Psoas muscle (tissue), 8 donors: ENCODE measurements at regions of chr7 and their contacts with region 1.

Region 1: GRCh38 chr7:2403014-2403717 is at the start of gene CHST12:
- DNase-seq: peak; percentile 94 to 97
- ATAC-seq: peak; percentile 93 to 94 (median 93)
- H3K4me3 ChIP-seq: peak within 1 kb of the TSS; percentile 95
- H3K27ac ChIP-seq: peak within 1 kb of the TSS; percentile 77
- H3K4me1 ChIP-seq: peaks cover 26% of the 10 kb centered on the region
- H3K27me3 ChIP-seq: no peaks in the 10 kb centered on the region
- CTCF ChIP-seq: no peak
- total RNA-seq, gene CHST12: 6.6 to 12.0 (median 9.4) TPM

Region 2: DNA sequence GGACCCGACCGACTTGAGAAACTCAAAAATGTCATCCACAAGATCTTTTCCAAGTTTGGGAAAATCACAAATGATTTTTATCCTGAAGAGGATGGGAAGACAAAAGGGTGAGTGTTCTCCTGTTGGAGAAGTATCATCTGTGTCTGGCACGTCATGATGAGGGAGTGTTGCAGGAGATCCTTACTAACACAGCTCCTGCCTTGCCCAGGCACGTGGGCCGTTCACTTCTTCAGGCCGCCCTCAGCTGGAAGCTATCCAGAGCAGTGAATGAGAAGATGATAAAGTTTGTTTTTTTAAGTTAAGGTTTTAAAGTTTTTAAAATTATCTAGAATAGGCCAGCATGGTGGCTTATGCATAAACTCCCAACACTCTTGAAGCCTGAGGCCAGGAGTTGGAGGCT is 42.4 kb before region 1 on chr7:
- intact Hi-C with region 1: loop called in 1 of 2 experiments (anchors 5 kb)
- DNase-seq: no peak
- ATAC-seq: no peak
- H3K4me3 ChIP-seq: no peak overlapping the region
- H3K27ac ChIP-seq: no peak overlapping the region
- H3K4me1 ChIP-seq: peaks cover 43% of the 10 kb centered on the region
- H3K27me3 ChIP-seq: no peaks in the 10 kb centered on the region
- CTCF ChIP-seq: no peak

Region 3: GRCh38 chr7:2431260-2431867 is 28.2 kb after region 1 on chr7:
- intact Hi-C with region 1: no loop called
- DNase-seq: no peak
- ATAC-seq: no peak
- H3K4me3 ChIP-seq: no peak overlapping the region
- H3K27ac ChIP-seq: no peak overlapping the region
- H3K4me1 ChIP-seq: no peaks in the 10 kb centered on the region
- H3K27me3 ChIP-seq: no peaks in the 10 kb centered on the region
- CTCF ChIP-seq: peak; percentile 18